Activated CD4-positive, alpha-beta memory T cell treated with anti-CD3 and anti-CD28 coated beads for 36 hours (primary cell): ENCODE measurements at regions of chr3 and their contacts with region 1.

Region 1: DNA sequence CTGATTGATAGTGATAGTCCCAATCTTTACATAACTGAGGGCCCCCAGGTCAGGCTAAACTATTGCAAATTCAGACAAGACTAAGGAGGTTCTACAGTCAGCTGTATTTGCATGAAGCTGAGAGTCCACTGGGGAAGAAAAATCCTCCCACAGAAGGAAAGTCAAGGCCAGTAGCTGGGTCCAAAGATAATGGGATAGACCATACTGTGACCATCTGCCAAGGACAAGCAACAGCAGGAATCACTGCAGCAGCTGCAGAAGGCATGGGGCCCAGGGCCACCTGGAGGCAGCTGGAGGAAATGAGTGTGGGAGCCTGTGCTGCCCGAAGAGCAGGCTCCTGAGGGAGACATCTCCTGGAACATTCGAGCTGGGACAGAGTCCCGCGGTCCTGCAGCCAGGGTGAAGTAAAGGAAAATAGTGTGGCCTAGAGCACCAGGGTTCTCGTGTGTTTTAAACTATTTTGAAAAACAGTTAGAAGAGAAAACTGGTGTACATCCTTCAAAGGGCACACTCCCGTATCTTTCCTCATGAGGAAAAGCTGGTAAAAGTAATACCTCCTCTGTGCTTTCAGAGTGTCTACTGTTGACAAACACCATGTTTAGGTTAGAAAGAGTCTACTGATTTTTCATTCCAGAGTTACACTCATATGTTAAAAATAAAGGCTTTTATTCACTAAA is 13.2 kb upstream of the TMEM212 start:
- DNase-seq: peak; percentile 40
- H3K4me3 Mint-ChIP-seq: no peak overlapping the region
- H3K27ac Mint-ChIP-seq: no peak overlapping the region
- H3K4me1 Mint-ChIP-seq: peaks cover 9% of the 10 kb centered on the region
- H3K27me3 Mint-ChIP-seq: peaks cover 4% of the 10 kb centered on the region

Region 2: DNA sequence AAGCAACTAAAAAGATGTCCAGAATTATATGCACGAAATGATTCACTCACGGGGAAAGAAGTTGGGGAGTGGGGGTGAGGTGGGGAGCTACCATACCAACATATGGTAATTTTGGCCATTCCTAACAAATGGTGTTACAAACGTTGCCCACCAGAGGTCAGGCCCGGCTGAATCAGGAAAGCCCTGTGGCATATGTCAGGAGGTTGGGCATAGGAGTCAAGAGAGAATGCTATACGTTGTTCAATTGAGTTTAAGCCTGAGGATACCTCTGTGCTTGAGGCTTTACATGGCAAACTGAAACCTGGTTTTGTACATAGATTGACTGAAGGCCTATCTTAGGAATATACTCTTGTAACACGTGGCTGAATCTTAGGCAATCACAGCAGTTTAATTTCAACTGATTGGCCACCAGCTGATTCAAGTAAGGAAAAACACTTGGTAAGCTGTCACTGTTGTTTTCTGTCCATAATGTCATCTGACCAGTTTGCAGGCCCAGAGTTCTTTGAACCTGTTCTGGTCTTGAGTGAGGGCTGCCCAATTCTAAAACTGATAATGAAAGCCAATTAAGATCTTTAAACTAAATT is 780.0 kb before region 1 on chr3:
- CTCF ChIA-PET with region 1: no interaction called
- POLR2A ChIA-PET with region 1: no interaction called
- intact Hi-C with region 1: loop called (anchors 5 kb)
- DNase-seq: peak; percentile 61
- H3K4me3 Mint-ChIP-seq: no peak overlapping the region
- H3K27ac Mint-ChIP-seq: no peak overlapping the region
- H3K4me1 Mint-ChIP-seq: no peaks in the 10 kb centered on the region
- H3K27me3 Mint-ChIP-seq: peaks cover 8% of the 10 kb centered on the region

Region 3: GRCh38 chr3:171646357-171647133 is 183.4 kb before region 1 on chr3:
- CTCF ChIA-PET with region 1: interaction called, 7 read pairs
- POLR2A ChIA-PET with region 1: no interaction called
- intact Hi-C with region 1: loop called (anchors 2 kb)
- DNase-seq: no peak
- H3K4me3 Mint-ChIP-seq: no peak overlapping the region
- H3K27ac Mint-ChIP-seq: no peak overlapping the region
- H3K4me1 Mint-ChIP-seq: no peaks in the 10 kb centered on the region
- H3K27me3 Mint-ChIP-seq: no peaks in the 10 kb centered on the region

Region 4: DNA sequence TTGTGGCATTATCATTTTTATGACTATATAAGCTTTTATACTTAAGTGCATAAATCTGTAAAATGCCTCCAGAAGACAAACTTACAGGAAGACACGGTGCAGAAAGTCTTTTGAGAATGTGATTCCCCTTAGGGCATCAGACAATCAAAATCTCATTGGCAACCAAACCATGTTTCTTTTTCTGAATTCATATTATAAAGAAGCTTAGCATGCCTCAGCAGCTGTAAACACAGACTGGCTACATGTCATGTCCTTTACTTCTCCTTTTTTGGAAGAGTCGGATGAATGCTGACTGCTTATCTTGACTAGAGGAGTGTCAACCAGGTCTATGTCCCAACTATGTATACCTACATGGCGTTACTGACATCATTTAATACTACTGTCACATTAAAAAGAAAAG is 169.8 kb before region 1 on chr3:
- CTCF ChIA-PET with region 1: no interaction called
- POLR2A ChIA-PET with region 1: no interaction called
- intact Hi-C with region 1: no loop called
- DNase-seq: no peak
- H3K4me3 Mint-ChIP-seq: no peak overlapping the region
- H3K27ac Mint-ChIP-seq: no peak overlapping the region
- H3K4me1 Mint-ChIP-seq: no peaks in the 10 kb centered on the region
- H3K27me3 Mint-ChIP-seq: peaks cover 2% of the 10 kb centered on the region

Region 5: GRCh38 chr3:171690281-171690680 is 139.7 kb before region 1 on chr3:
- CTCF ChIA-PET with region 1: no interaction called
- POLR2A ChIA-PET with region 1: no interaction called
- intact Hi-C with region 1: no loop called
- DNase-seq: no peak
- H3K4me3 Mint-ChIP-seq: no peak overlapping the region
- H3K27ac Mint-ChIP-seq: no peak overlapping the region
- H3K4me1 Mint-ChIP-seq: peaks cover 4% of the 10 kb centered on the region
- H3K27me3 Mint-ChIP-seq: peaks cover 3% of the 10 kb centered on the region

Region 6: GRCh38 chr3:171703756-171704401 is 126.1 kb before region 1 on chr3:
- CTCF ChIA-PET with region 1: interaction called, 12 read pairs
- POLR2A ChIA-PET with region 1: no interaction called
- intact Hi-C with region 1: loop called (anchors 10 kb)
- DNase-seq: peak; percentile 31
- H3K4me3 Mint-ChIP-seq: no peak overlapping the region
- H3K27ac Mint-ChIP-seq: no peak overlapping the region
- H3K4me1 Mint-ChIP-seq: no peaks in the 10 kb centered on the region
- H3K27me3 Mint-ChIP-seq: peaks cover 9% of the 10 kb centered on the region

Region 7: GRCh38 chr3:172221547-172221946 is 391.6 kb after region 1 on chr3:
- CTCF ChIA-PET with region 1: no interaction called
- POLR2A ChIA-PET with region 1: no interaction called
- intact Hi-C with region 1: no loop called
- DNase-seq: no peak
- H3K4me3 Mint-ChIP-seq: no peak overlapping the region
- H3K27ac Mint-ChIP-seq: no peak overlapping the region
- H3K4me1 Mint-ChIP-seq: peaks cover 16% of the 10 kb centered on the region
- H3K27me3 Mint-ChIP-seq: no peaks in the 10 kb centered on the region